K562 (cell line): ENCODE measurements at regions of chr2 and their contacts with region 1.

Region 1: DNA sequence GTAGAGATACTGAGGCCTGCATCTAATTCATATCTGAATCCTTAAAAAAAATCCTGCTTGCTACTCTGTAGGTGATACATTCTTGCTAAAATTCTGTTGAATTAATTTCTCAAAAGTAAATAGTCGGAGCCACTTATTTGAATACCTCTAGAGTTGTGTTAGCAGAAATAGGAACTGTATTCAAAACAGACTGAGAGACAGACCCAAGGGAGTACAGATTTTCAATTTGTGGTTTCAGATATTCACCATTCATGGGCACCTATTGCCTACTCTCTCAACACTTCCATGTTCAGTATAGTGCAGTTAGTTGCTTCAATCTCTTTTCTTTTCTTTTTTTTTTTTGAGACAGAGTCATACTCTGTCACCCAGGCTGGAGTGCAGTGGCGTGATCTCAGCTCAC is 46.6 kb upstream of the CTLA4 start:
- DNase-seq: no peak
- ATAC-seq: no peak
- H3K4me3 ChIP-seq: no peak overlapping the region
- H3K27ac ChIP-seq: no peak overlapping the region
- H3K4me1 ChIP-seq: no peaks in the 10 kb centered on the region
- H3K27me3 ChIP-seq: peaks cover 0 to 15% of the 10 kb centered on the region in 2 experiments; a peak in 2 of 5 replicates
- CTCF ChIP-seq: no peak
- EP300 ChIP-seq: no peak
- POLR2A ChIP-seq: no peak
- RAD21 ChIP-seq: no peak

Region 2: GRCh38 chr2:202577250-202578183 is 1243.5 kb before region 1 on chr2:
- CTCF ChIA-PET with region 1: no interaction called
- POLR2A ChIA-PET with region 1: no interaction called
- in situ Hi-C with region 1: loop called (anchors 10 kb)
- intact Hi-C with region 1: no loop called
- DNase-seq: no peak
- ATAC-seq: no peak
- H3K4me3 ChIP-seq: no peak overlapping the region
- H3K27ac ChIP-seq: no peak overlapping the region
- H3K4me1 ChIP-seq: no peaks in the 10 kb centered on the region
- H3K27me3 ChIP-seq: no peaks in the 10 kb centered on the region
- CTCF ChIP-seq: no peak
- EP300 ChIP-seq: no peak
- POLR2A ChIP-seq: no peak
- RAD21 ChIP-seq: no peak